OCI-LY7 (cell line): ENCODE measurements at regions of chr12 and their contacts with region 1.

Region 1: DNA sequence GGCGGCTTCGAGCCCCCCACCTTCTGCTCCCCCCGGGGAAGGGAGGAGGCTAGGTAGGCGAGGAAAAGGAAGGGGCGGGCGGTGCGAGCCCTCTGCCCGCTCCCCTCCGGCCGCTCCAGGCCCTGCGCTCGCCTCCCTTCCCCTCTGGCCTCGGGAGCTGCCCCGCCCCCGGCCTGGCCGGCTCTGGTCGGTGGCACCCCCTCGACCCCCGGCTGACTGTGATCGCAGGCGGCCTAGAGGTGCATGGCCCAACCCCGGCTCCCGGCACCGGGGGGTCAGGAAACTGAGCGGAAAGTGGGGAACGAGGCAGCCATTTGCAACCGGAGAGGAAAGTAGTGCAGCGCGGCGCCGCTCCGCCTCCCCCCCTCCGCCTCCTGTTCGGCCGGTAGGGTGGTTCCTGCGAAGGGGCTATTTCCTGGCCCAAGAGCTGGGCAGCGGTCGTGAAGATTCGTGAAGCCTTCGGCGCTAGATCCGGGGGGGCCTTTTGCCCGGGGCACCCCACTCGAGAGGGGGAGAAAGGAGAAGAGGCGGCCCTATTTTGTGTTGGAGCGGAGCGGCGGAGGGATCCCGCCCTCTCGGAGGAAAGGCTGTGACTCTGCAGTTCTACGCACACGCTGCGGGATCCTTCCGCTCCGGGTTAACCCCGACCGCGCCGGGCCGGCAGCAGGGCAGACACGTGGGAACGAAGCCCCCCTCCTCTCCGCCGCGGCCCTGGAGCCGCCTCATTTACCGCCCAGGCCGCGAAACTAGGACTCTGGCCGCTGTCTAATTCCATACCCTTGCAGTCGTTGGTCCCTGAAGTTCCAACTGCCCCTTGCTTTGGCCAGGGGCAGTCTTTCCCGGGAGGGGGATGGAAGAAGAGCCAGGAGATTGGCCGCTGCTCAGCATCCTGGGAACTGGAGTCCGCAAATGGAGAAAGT is at the start of gene KMT2D:
- DNase-seq: peak; percentile 98
- H3K4me3 ChIP-seq: peak within 1 kb of the TSS; percentile 87
- H3K27ac ChIP-seq: peak within 1 kb of the TSS; percentile 72
- H3K4me1 ChIP-seq: peaks cover 38% of the 10 kb centered on the region
- CTCF ChIP-seq: no peak
- total RNA-seq, gene KMT2D: 41.8 and 43.2 TPM in 2 replicates

Region 2: GRCh38 chr12:49049566-49050413 is 10.7 kb before region 1 on chr12:
- CTCF ChIA-PET with region 1: no interaction called
- POLR2A ChIA-PET with region 1: no interaction called
- intact Hi-C with region 1: no loop called
- DNase-seq: no peak
- H3K4me3 ChIP-seq: no peak overlapping the region
- H3K27ac ChIP-seq: no peak overlapping the region
- H3K4me1 ChIP-seq: no peaks in the 10 kb centered on the region
- CTCF ChIP-seq: no peak

Region 3: GRCh38 chr12:49098035-49098451 is 37.5 kb after region 1 on chr12:
- CTCF ChIA-PET with region 1: interaction called, 3 read pairs
- POLR2A ChIA-PET with region 1: interaction called, 3 read pairs
- intact Hi-C with region 1: loop called (anchors 1 kb)
- DNase-seq: peak; percentile 58
- H3K4me3 ChIP-seq: no peak overlapping the region
- H3K27ac ChIP-seq: no peak overlapping the region
- H3K4me1 ChIP-seq: no peaks in the 10 kb centered on the region
- CTCF ChIP-seq: peak; percentile 87

Region 4: GRCh38 chr12:49232940-49233841 is 172.7 kb after region 1 on chr12:
- CTCF ChIA-PET with region 1: no interaction called
- POLR2A ChIA-PET with region 1: no interaction called
- intact Hi-C with region 1: loop called (anchors 1 kb)
- DNase-seq: no peak
- H3K4me3 ChIP-seq: no peak overlapping the region
- H3K27ac ChIP-seq: no peak overlapping the region
- H3K4me1 ChIP-seq: peaks cover 4% of the 10 kb centered on the region
- CTCF ChIP-seq: no peak